Mammary epithelial cell (primary cell): ENCODE measurements at regions of chr22 and their contacts with region 1.

Region 1: GRCh38 chr22:35350539-35351503 is 30.1 kb upstream of the HMOX1 start:
- DNase-seq: peak; percentile 84
- H3K4me3 ChIP-seq: peak overlapping the region; percentile 50 to 52 (median 51)
- H3K27ac ChIP-seq: peak overlapping the region; percentile 47
- H3K4me1 ChIP-seq: peaks cover 8% of the 10 kb centered on the region
- H3K27me3 ChIP-seq: no peaks in the 10 kb centered on the region
- CTCF ChIP-seq: peak; percentile 71 to 82

Region 2: DNA sequence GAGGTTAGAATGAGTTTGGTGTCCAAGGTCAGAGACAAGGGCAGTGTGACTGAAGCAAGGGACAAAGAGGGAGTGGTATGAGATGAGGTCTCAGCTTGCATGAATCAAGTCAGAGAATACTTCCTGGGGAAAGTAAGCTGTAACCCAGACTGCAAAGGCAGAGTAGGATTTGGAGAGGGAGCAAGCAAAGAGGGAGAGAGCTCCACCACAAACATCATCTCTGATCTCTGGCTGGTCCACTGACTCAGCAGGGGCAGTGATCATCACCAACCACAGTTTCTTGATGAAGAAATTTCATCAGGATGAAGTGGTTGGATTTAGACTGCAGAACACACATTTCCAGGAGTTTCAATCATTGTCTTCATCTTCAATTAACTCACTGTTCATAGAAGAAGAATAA is 148.4 kb before region 1 on chr22:
- CTCF ChIA-PET with region 1: no interaction called
- dilution Hi-C with region 1: no loop called
- in situ Hi-C with region 1: no loop called
- intact Hi-C with region 1: no loop called
- DNase-seq: peak; percentile 45
- H3K4me3 ChIP-seq: no peak overlapping the region
- H3K27ac ChIP-seq: no peak overlapping the region
- H3K4me1 ChIP-seq: no peaks in the 10 kb centered on the region
- H3K27me3 ChIP-seq: no peaks in the 10 kb centered on the region
- CTCF ChIP-seq: no peak

Region 3: DNA sequence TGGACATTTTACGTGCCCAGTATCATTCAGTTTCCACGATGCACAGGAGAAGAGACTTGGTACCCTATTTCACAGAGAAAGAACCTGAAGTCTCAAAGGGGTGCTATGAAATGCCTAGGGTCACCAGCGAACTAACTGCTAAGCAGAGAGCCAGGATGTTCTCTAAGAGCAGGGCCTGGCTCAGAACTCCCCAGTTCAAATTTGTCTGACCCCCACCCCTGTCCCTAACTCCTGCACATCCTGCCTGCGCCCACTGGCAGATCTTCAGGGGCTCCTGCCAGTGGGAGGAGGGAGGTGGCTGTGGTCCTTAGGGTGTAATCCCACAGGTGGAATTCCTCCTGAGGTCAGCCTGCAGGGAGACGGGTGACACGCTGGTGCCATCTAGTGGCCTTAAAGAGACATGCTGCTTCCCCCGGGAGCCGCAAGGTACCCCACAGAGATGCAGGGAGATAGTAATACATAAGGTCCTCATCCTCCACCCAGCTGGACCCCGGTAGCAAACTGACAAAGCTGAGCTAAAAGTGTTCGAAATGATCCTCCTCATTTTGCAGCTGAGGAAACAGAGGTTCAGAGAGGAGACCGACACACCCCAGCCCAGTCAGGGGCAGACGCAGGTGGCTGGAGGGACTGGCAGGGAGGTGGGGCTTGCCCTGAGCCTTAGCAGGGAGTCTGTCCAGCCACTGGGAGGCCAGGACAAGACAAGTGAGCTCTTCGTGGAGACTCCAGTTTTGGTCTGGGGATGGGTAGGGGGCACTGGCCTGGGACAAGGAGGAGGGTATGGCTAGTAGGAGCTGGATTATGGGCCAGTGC is 232.2 kb after region 1 on chr22:
- CTCF ChIA-PET with region 1: no interaction called
- dilution Hi-C with region 1: no loop called
- in situ Hi-C with region 1: loop called (anchors 5 to 10 kb)
- intact Hi-C with region 1: loop called (anchors 1 kb)
- DNase-seq: no peak
- H3K4me3 ChIP-seq: no peak overlapping the region
- H3K27ac ChIP-seq: no peak overlapping the region
- H3K4me1 ChIP-seq: peaks cover under 1% of the 10 kb centered on the region
- H3K27me3 ChIP-seq: no peaks in the 10 kb centered on the region
- CTCF ChIP-seq: peak; percentile 85 to 93